Aorta (tissue), 5 donors: ENCODE measurements at regions of chr15 and their contacts with region 1.

Region 1: GRCh38 chr15:34209421-34210282 is at the start of gene KATNBL1:
- DNase-seq: peak; percentile 98 to 100
- ATAC-seq: peak; percentile 99
- H3K4me3 ChIP-seq: peak within 1 kb of the TSS; percentile 68 to 87
- H3K27ac ChIP-seq: peak within 1 kb of the TSS; percentile 46
- H3K4me1 ChIP-seq: peaks cover 0 to 2% of the 10 kb centered on the region in 2 donors
- H3K27me3 ChIP-seq: no peaks in the 10 kb centered on the region
- total RNA-seq, gene KATNBL1: 64.5 to 64.7 TPM

Region 2: GRCh38 chr15:34064438-34064837 is 145.2 kb before region 1 on chr15:
- intact Hi-C with region 1: loop called (anchors 2 to 5 kb)
- DNase-seq: no peak
- ATAC-seq: no peak
- H3K4me3 ChIP-seq: no peak overlapping the region
- H3K27ac ChIP-seq: no peak overlapping the region
- H3K4me1 ChIP-seq: no peaks in the 10 kb centered on the region
- H3K27me3 ChIP-seq: no peaks in the 10 kb centered on the region